ENCODE measurements at regions of chr1 and their contacts with region 1.

Region 1: GRCh38 chr1:35030756-35031446 is 844 bp downstream of the ZMYM6 start:
- DNase-seq: no peak
- H3K4me3 ChIP-seq: peak overlapping the region; percentile 61 to 76 (median 70)
- H3K27ac ChIP-seq: peak overlapping the region; percentile 90 to 93 (median 92)
- H3K4me1 ChIP-seq: peaks cover 0 to 23% (median 18%) of the 10 kb centered on the region in 4 donors
- H3K27me3 ChIP-seq: no peaks in the 10 kb centered on the region
- CTCF ChIP-seq: no peak
- EP300 ChIP-seq: no peak
- POLR2A ChIP-seq: no peak

Region 2: DNA sequence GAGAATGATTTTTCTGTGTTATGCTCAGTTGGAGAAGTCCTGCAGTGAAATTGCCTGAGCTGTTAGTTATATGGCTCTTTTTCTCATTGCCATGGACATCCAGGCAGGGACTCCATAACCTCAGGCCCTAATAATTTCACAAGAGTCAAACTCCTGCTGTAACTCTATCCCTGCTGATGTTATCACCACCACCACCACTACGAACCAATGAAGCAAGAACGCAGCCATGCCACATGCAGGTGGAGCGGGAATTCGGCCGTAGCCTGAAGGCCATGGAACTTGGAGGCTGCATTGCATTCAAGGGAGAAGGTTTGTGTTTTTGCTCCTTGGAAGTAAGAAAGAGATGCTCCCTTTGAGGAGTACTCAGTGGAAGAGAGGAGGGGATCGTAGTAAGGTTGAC is 84.7 kb before region 1 on chr1:
- intact Hi-C with region 1: no loop called
- DNase-seq: no peak
- H3K4me3 ChIP-seq: no peak overlapping the region
- H3K27ac ChIP-seq: no peak overlapping the region
- H3K4me1 ChIP-seq: no peaks in the 10 kb centered on the region
- H3K27me3 ChIP-seq: no peaks in the 10 kb centered on the region
- CTCF ChIP-seq: no peak
- EP300 ChIP-seq: no peak
- POLR2A ChIP-seq: no peak

Region 3: DNA sequence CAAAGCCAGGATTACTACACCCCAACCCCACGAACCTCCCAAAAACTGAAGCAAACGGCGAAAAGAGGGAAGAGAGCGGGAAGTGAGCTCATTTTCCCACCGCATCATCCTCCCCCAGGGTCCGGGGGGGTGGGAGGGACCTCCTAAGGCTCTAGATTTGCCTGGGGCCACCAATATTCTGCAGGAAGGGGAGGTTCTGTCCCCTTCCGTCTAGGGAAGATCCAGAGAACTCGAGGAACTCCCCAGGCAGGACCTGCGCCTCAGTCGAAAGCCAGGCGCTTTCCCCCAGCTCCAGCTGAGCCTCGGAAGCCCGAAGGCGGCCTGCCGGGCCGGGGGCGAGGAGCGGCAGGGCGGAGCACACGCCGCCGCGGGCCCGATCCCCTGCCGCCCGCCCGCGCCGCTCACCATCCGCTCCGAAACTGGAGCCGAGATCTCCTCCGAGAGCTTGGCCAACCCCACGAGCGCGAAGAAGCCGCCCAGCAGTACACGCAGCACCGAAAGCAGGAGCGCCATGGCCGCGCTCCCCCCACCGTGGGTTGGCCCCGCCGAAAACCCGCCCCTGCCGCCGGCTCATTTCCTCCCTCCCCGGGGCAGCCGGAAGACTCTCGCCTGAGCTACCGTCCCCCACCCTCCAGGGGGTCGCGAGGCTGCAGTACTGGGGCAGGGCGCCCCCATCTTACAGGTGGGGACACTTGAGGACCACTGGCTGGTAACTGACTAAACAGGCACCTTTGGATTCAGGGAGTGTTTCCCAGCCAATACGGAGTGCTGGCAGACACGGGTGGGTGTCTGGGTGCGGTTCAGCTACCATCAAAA is 45.9 kb before region 1 on chr1 and contains the start of gene TMEM35B:
- intact Hi-C with region 1: loop called (anchors 5 kb)
- DNase-seq: peak; percentile 80
- H3K4me3 ChIP-seq: peak within 1 kb of the TSS; percentile 65 to 90 (median 72)
- H3K27ac ChIP-seq: peak within 1 kb of the TSS; percentile 92 to 94 (median 92)
- H3K4me1 ChIP-seq: peaks cover 0 to 28% (median 19%) of the 10 kb centered on the region in 4 donors
- H3K27me3 ChIP-seq: no peaks in the 10 kb centered on the region
- CTCF ChIP-seq: no peak
- EP300 ChIP-seq: no peak
- POLR2A ChIP-seq: peak; percentile 44 to 49
- total RNA-seq, gene TMEM35B: 18.6 to 53.8 (median 29.0) TPM

Region 4: GRCh38 chr1:35079003-35079930 is 48.4 kb after region 1 on chr1 and contains the start of gene ZMYM1:
- intact Hi-C with region 1: loop called (anchors 1 kb)
- DNase-seq: peak; percentile 91
- H3K4me3 ChIP-seq: peak within 1 kb of the TSS; percentile 60 to 71 (median 63)
- H3K27ac ChIP-seq: peak within 1 kb of the TSS; percentile 86 to 91 (median 88)
- H3K4me1 ChIP-seq: peaks cover 0 to 22% (median 14%) of the 10 kb centered on the region in 4 donors
- H3K27me3 ChIP-seq: no peaks in the 10 kb centered on the region
- CTCF ChIP-seq: no peak
- EP300 ChIP-seq: no peak
- POLR2A ChIP-seq: peak; percentile 39 to 42
- total RNA-seq, gene ZMYM1: 13.0 to 29.6 (median 19.3) TPM

Region 5: GRCh38 chr1:35192853-35193664 is 162.2 kb after region 1 on chr1 and contains the start of gene SFPQ:
- intact Hi-C with region 1: loop called (anchors 5 kb)
- DNase-seq: peak; percentile 99
- H3K4me3 ChIP-seq: peak within 1 kb of the TSS; percentile 95 to 100 (median 97)
- H3K27ac ChIP-seq: peak within 1 kb of the TSS; percentile 98 to 100 (median 100)
- H3K4me1 ChIP-seq: peaks cover 0 to 42% (median 37%) of the 10 kb centered on the region in 4 donors
- H3K27me3 ChIP-seq: no peaks in the 10 kb centered on the region
- CTCF ChIP-seq: no peak
- EP300 ChIP-seq: no peak
- POLR2A ChIP-seq: peak; percentile 80 to 93
- total RNA-seq, gene SFPQ: 118 to 194 (median 153) TPM

Region 6: GRCh38 chr1:35243691-35244090 is 212.8 kb after region 1 on chr1:
- intact Hi-C with region 1: no loop called
- DNase-seq: no peak
- H3K4me3 ChIP-seq: no peak overlapping the region
- H3K27ac ChIP-seq: no peak overlapping the region
- H3K4me1 ChIP-seq: no peaks in the 10 kb centered on the region
- H3K27me3 ChIP-seq: no peaks in the 10 kb centered on the region
- CTCF ChIP-seq: no peak
- EP300 ChIP-seq: no peak
- POLR2A ChIP-seq: no peak

Measured in sigmoid colon (tissue), 7 donors.